H1 (cell line): ENCODE measurements at regions of chr6 and their contacts with region 1.

Region 1: DNA sequence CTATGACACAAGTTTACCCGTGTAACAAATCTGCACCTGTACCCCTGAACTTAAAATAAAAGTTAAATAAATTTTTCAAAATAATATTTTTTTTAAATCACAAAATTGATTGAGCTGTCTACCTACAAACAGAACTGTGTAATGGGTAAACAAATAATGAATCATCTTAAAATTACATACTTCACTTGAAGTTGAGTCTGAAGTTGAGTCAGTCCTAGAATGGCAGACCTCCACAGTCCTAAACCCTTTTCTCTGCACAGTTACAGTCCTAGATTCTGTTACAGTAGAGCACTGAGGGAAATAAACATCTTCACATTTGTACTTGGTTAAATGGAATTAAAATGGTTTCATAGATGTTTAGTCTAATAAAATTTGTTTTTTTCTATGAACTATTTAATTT is 880.8 kb downstream of the PHF3 start:
- DNase-seq: no peak
- H3K4me3 ChIP-seq: no peak overlapping the region
- H3K27ac ChIP-seq: no peak overlapping the region
- H3K4me1 ChIP-seq: no peaks in the 10 kb centered on the region
- H3K27me3 ChIP-seq: no peaks in the 10 kb centered on the region
- CTCF ChIP-seq: no peak
- EP300 ChIP-seq: no peak
- POLR2A ChIP-seq: no peak
- RAD21 ChIP-seq: no peak

Region 2: GRCh38 chr6:64477391-64477790 is 39.0 kb before region 1 on chr6:
- CTCF ChIA-PET with region 1: no interaction called
- POLR2A ChIA-PET with region 1: no interaction called
- DNase-seq: no peak
- H3K4me3 ChIP-seq: no peak overlapping the region
- H3K27ac ChIP-seq: no peak overlapping the region
- H3K4me1 ChIP-seq: peaks cover 0 to 3% (median 0%) of the 10 kb centered on the region in 4 experiments; a peak in 1 of 7 replicates
- H3K27me3 ChIP-seq: no peaks in the 10 kb centered on the region
- CTCF ChIP-seq: no peak
- EP300 ChIP-seq: no peak
- POLR2A ChIP-seq: no peak
- RAD21 ChIP-seq: no peak

Region 3: GRCh38 chr6:64505312-64505711 is 11.1 kb before region 1 on chr6:
- CTCF ChIA-PET with region 1: interaction called, 19 read pairs
- POLR2A ChIA-PET with region 1: no interaction called
- DNase-seq: peak in 1 of 2 experiments; percentile 78
- H3K4me3 ChIP-seq: no peak overlapping the region
- H3K27ac ChIP-seq: no peak overlapping the region
- H3K4me1 ChIP-seq: no peaks in the 10 kb centered on the region
- H3K27me3 ChIP-seq: no peaks in the 10 kb centered on the region
- CTCF ChIP-seq: peak; percentile 68 to 91 (median 89)
- EP300 ChIP-seq: no peak
- POLR2A ChIP-seq: no peak
- RAD21 ChIP-seq: peak; percentile 57 to 69